ENCODE measurements at regions of chr6 and their contacts with region 1.

Region 1: DNA sequence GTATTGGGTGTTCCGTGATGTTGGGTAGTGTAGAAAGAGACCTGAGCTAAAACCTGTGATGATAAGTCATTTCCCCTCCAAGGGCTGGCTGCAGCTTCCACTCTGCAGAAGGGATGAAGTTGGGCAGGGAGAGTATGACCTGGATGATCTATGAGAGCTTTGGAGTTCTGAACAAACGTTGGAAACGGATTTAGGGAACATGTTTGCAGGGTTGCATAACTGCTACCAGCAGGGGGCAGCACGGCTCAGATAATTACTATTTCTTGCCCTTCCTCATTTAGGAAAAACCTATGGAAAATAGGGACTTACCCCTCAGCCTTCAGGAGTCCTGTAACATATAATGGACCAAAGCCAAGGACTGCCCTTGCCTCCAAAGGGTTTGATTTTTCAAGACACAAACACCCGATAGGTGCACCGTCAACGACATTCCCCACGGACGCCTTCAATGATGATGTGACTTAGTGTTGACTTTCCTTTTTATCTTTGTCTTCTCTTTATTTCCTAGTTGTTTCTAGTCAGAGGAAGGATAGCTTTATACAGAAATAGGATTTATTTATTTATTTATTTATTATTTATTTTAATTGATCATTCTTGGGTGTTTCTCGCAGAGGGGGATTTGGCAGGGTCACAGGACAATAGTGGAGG is 164.9 kb upstream of the SASH1 start:
- DNase-seq: peak; percentile 7 to 63
- ATAC-seq: peak; percentile 68; a peak in 5 of 6 replicates
- H3K4me3 ChIP-seq: no peak overlapping the region
- H3K27ac ChIP-seq: no peak overlapping the region
- H3K4me1 ChIP-seq: no peaks in the 10 kb centered on the region
- CTCF ChIP-seq: peak; percentile 69
- EP300 ChIP-seq: no peak
- POLR2A ChIP-seq: no peak
- RAD21 ChIP-seq: peak; percentile 67 to 71

Region 2: DNA sequence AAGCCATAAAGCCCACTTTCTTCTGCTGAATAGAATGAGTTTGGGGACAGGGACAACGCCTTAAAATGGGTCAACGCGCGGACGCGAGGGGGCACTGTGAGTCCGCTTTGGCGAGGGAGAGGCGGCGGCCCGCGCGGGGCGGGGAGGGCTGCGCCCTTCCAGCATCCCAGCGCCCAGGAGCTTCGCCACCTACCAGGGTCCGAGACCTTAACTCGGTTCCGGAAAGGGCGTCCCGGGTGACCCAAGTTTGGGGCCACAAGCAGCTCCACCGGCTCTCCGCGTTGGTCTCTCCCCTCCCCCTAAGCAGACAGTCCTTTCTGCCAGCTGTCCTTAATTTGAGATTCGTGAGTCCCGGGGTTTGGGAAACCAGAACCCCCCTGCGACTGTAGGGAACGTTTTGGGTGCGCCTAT is 671.0 kb before region 1 on chr6:
- CTCF ChIA-PET with region 1: interaction called, 19 read pairs
- POLR2A ChIA-PET with region 1: no interaction called
- DNase-seq: peak; percentile 55 to 58
- ATAC-seq: peak; percentile 51 to 84; a peak in 5 of 6 replicates
- H3K4me3 ChIP-seq: peak overlapping the region; percentile 74
- H3K27ac ChIP-seq: peak overlapping the region in 1 of 2 experiments; percentile 82; a peak in 2 of 6 replicates
- H3K4me1 ChIP-seq: 0 out of 3 replicates have a peak, but pooled peaks cover 5% of the 10 kb centered on the region
- CTCF ChIP-seq: peak; percentile 80
- EP300 ChIP-seq: no peak
- POLR2A ChIP-seq: no peak
- RAD21 ChIP-seq: peak; percentile 86 to 93

Region 3: DNA sequence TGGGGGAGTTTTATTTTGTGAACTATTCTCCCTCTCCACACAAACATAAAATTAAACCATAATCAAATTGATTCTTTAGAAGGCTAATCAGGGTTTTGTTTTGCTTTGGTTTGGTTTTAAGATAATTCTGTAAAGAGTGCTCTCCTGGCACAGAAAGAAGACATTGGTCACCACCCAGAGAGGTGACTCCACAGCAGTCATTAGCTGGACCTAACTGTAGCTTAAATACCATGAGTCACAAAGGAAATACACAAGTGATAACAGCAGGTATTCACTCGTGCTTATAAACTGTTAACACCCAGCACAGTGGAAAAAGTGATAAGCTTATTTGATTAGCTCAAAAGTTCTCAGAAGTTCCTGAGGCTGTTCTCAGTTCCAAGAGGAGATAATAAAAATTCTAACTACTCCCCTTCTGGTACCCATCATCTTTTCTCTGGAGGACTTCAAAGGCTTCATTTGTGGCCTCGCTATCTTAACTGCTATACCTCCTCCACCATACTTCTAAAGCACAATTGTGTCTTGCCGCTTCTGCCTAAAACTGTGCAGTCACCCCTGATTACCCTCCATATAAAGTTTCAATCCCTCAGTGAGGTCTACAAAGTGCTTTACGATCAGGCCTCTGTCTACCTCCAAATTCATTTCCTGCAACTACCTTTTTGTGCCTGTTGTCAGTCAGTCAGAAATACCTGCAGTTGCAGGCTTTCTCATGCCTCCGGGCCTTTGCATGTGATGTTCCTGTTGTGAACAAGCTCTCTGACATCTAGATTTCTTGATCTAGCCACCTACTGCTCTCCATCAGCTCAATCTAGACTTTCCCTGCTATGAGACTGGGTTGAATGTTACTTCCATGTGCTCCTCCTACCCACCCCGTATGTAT is 468.1 kb before region 1 on chr6:
- CTCF ChIA-PET with region 1: no interaction called
- POLR2A ChIA-PET with region 1: no interaction called
- DNase-seq: no peak
- ATAC-seq: no peak
- H3K4me3 ChIP-seq: no peak overlapping the region
- H3K27ac ChIP-seq: no peak overlapping the region
- H3K4me1 ChIP-seq: no peaks in the 10 kb centered on the region
- CTCF ChIP-seq: no peak
- EP300 ChIP-seq: no peak
- POLR2A ChIP-seq: no peak
- RAD21 ChIP-seq: no peak

Region 4: DNA sequence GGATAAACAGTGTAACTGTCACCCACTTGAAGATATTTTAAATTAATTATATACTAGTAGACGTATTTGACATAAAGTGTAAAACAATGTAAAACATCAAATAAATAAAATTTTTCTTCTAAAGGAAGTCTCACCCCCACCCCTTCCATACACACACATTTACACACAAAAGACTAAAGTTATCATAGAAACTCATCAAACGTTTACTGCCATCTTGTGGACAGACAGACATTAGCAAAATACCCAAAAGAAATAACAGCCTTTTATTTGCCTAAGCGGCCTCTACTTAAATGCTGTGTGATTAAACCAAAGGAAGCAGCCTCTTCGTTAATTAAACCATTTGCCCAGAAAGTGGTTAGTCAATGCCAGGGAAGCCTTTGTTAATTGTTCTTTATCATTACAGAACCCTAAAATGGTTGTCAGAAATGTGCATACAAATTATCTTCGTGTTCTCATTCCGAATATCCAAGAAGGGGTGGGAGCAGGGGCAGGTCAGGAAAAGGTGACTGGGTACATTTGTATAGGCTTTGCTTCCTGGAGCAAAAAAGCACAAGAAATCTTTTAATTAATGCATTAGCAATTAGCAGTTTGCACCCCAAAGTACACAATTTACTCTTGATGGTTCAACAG is 11.3 kb before region 1 on chr6:
- CTCF ChIA-PET with region 1: interaction called, 17 read pairs
- POLR2A ChIA-PET with region 1: no interaction called
- DNase-seq: peak; percentile 16 to 57
- ATAC-seq: peak in 1 of 2 experiments; percentile 68; a peak in 2 of 6 replicates
- H3K4me3 ChIP-seq: no peak overlapping the region
- H3K27ac ChIP-seq: no peak overlapping the region
- H3K4me1 ChIP-seq: no peaks in the 10 kb centered on the region
- CTCF ChIP-seq: peak; percentile 66
- EP300 ChIP-seq: no peak
- POLR2A ChIP-seq: no peak
- RAD21 ChIP-seq: peak; percentile 74 to 80

Region 5: GRCh38 chr6:148192310-148192709 is 14.6 kb after region 1 on chr6:
- CTCF ChIA-PET with region 1: interaction called, 14 read pairs
- POLR2A ChIA-PET with region 1: no interaction called
- DNase-seq: no peak
- ATAC-seq: no peak
- H3K4me3 ChIP-seq: no peak overlapping the region
- H3K27ac ChIP-seq: no peak overlapping the region
- H3K4me1 ChIP-seq: no peaks in the 10 kb centered on the region
- CTCF ChIP-seq: no peak
- EP300 ChIP-seq: no peak
- POLR2A ChIP-seq: no peak
- RAD21 ChIP-seq: no peak

Region 6: DNA sequence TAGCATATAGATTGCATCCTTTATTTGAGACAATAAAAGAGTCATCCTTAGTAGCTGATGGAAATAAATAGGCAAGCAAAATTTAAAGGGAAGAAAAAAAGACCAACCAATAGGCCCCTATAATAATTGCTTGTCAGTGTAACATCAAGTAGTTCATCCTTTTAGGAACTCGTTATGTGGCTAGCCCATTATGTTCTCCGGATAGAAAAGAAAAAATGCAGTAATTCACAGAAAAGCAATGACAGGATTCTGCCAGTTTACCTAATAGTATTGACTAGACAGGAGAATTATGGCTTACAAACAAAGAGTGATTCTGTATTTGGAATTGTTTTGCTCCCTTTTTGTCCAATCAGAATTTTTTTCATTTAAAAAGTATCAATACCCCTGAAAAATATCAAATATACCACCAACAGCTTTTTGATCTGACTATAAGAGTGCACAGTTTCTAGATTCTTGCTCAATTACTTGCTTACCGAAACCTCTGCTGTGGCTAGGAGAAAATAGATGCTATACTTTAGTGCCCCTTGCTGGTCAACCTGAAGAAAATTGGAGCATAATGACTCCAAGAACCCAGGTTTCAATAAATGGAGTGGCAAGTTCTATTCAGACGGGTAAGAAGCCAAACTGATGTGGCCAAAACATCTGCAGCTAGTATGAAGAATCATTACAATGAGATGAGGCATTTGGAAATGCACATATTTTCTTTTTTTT is 73.4 kb after region 1 on chr6:
- CTCF ChIA-PET with region 1: interaction called, 33 read pairs
- POLR2A ChIA-PET with region 1: no interaction called
- DNase-seq: peak in 1 of 2 experiments; percentile 46
- ATAC-seq: peak; percentile 50 to 65; a peak in 2 of 6 replicates
- H3K4me3 ChIP-seq: no peak overlapping the region
- H3K27ac ChIP-seq: no peak overlapping the region
- H3K4me1 ChIP-seq: no peaks in the 10 kb centered on the region
- CTCF ChIP-seq: no peak; the same call in 2 of the 3 replicates
- EP300 ChIP-seq: no peak
- POLR2A ChIP-seq: no peak
- RAD21 ChIP-seq: peak; percentile 54 to 56

Region 7: GRCh38 chr6:148329596-148330381 is 152.1 kb after region 1 on chr6:
- CTCF ChIA-PET with region 1: no interaction called
- POLR2A ChIA-PET with region 1: no interaction called
- DNase-seq: no peak
- ATAC-seq: no peak
- H3K4me3 ChIP-seq: no peak overlapping the region
- H3K27ac ChIP-seq: no peak overlapping the region
- H3K4me1 ChIP-seq: no peaks in the 10 kb centered on the region
- CTCF ChIP-seq: no peak
- EP300 ChIP-seq: no peak
- POLR2A ChIP-seq: no peak
- RAD21 ChIP-seq: no peak

Region 8: GRCh38 chr6:148464319-148465010 is 286.8 kb after region 1 on chr6:
- CTCF ChIA-PET with region 1: interaction called, 28 read pairs
- POLR2A ChIA-PET with region 1: no interaction called
- DNase-seq: peak; percentile 32 to 53
- ATAC-seq: peak; percentile 80 to 87
- H3K4me3 ChIP-seq: no peak overlapping the region
- H3K27ac ChIP-seq: no peak overlapping the region
- H3K4me1 ChIP-seq: peaks cover 4% of the 10 kb centered on the region; the same call in 1 of the 3 replicates
- CTCF ChIP-seq: peak; percentile 84
- EP300 ChIP-seq: no peak
- POLR2A ChIP-seq: no peak
- RAD21 ChIP-seq: peak; percentile 83 to 91

Region 9: DNA sequence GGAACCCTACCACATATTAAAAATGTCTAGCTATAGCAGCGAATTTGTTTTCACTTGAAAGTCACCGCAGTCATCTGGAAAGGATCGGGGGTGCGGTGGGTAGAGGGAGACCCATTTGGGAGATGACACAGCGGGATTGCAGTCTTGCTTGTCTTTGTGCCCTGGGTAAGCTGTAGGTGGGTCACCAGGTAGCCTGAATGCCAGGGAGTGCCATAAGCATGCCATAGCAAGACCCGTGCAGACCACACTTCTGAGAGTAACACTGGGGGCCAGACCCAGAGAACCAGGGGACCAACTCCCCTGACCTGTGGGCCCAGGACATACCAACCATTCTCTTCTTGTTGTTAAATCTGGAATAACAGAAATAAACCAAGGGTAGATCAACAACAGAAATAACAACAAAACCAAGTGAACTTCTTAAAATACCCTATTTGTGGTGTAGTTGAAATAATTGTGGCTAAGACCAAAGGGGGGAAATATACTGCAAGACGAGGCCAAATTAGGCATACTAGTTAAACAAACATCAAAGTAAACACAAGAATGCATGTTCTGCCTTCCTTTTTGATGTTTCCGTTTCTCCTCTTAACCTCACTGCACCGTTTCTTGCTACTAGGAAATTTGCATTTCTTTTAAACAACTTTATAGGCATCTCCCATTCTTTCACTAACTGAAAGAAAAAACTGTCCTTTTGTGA is 293.0 kb after region 1 on chr6:
- CTCF ChIA-PET with region 1: interaction called, 28 read pairs
- POLR2A ChIA-PET with region 1: no interaction called
- DNase-seq: no peak
- ATAC-seq: no peak
- H3K4me3 ChIP-seq: no peak overlapping the region
- H3K27ac ChIP-seq: no peak overlapping the region
- H3K4me1 ChIP-seq: no peaks in the 10 kb centered on the region
- CTCF ChIP-seq: no peak
- EP300 ChIP-seq: no peak
- POLR2A ChIP-seq: no peak
- RAD21 ChIP-seq: no peak

Measured in A549 (cell line).